CD14-positive monocyte (primary cell): ENCODE measurements at regions of chr10 and their contacts with region 1.

Region 1: GRCh38 chr10:79195091-79195923 is 126.5 kb downstream of the ZMIZ1 start:
- DNase-seq: peak; percentile 75 to 80 (median 79)
- H3K4me3 ChIP-seq: no peak overlapping the region
- H3K4me3 Mint-ChIP-seq: no peak overlapping the region
- H3K27ac ChIP-seq: no peak overlapping the region
- H3K27ac Mint-ChIP-seq: peak overlapping the region in 2 of 7 donors; percentile 17 to 56
- H3K4me1 ChIP-seq: peaks cover 4 to 5% of the 10 kb centered on the region in 2 donors
- H3K4me1 Mint-ChIP-seq: peaks cover 16% of the 10 kb centered on the region
- H3K27me3 ChIP-seq: no peaks in the 10 kb centered on the region
- H3K27me3 Mint-ChIP-seq: peaks cover 0 to 3% (median 2%) of the 10 kb centered on the region in 3 donors
- CTCF ChIP-seq: peak; percentile 97

Region 2: DNA sequence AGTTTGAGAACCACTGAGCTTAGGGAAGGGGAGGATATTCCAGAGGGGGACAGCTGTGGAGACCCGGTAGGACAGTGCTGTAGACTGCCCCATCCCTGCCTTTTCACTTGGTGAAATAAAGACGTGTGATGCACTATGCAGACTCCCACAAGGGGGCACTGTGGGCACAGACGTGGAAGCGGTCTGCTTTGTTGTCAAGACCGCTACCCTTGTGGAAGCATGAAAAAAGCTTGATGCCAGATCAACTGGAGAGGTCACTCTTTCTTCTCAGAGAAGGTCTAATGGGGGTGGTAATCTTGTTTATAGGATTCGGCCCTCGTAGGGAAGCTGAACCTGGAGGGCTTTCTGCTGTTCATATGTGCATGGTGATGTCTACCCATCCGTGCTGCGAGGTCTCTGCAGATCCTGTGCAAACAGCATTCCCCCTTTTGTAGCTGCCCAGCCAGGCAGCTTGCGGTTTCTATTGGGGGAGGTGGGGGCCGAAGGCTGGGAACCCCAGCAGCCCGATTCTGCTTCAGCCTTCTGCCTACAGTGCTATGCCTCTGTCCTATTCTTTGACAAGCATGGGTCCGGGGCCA is 1147.9 kb before region 1 on chr10:
- intact Hi-C with region 1: loop called (anchors 2 to 5 kb)
- DNase-seq: peak; percentile 54 to 65 (median 65)
- H3K4me3 ChIP-seq: no peak overlapping the region
- H3K4me3 Mint-ChIP-seq: peak overlapping the region in 1 of 2 donors; percentile 20
- H3K27ac ChIP-seq: no peak overlapping the region
- H3K27ac Mint-ChIP-seq: peak overlapping the region in 1 of 7 donors; percentile 57
- H3K4me1 ChIP-seq: peaks cover 0 to 8% of the 10 kb centered on the region in 2 donors
- H3K4me1 Mint-ChIP-seq: peaks cover 19% of the 10 kb centered on the region
- H3K27me3 ChIP-seq: no peaks in the 10 kb centered on the region
- H3K27me3 Mint-ChIP-seq: peaks cover 0 to 2% (median 1%) of the 10 kb centered on the region in 3 donors
- CTCF ChIP-seq: peak; percentile 90

Region 3: DNA sequence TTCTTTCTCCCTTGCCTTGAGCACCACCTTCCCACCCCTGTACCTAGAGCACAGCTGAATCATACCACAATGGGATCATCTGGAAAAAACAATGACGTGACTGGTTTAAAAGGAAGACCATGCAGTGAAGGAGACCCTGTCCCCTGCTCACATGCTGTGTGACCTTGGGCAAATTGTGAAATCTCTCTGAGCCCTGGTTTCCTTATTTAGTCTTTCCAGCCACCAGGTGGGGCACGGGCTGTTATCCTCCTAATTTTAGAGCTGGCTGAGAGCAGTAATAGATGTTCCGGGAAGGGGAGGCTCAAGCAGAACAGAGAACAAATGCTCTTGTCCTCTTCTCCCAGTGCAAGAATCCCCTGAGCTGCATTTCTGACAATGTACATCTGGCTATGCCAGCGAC is 963.4 kb before region 1 on chr10:
- intact Hi-C with region 1: loop called (anchors 5 to 10 kb)
- DNase-seq: peak in 2 of 3 donors; percentile 36 to 47
- H3K4me3 ChIP-seq: no peak overlapping the region
- H3K4me3 Mint-ChIP-seq: no peak overlapping the region
- H3K27ac ChIP-seq: no peak overlapping the region
- H3K27ac Mint-ChIP-seq: peak overlapping the region in 1 of 7 donors; percentile 19
- H3K4me1 ChIP-seq: peaks cover 6 to 10% of the 10 kb centered on the region in 2 donors
- H3K4me1 Mint-ChIP-seq: peaks cover 8% of the 10 kb centered on the region
- H3K27me3 ChIP-seq: no peaks in the 10 kb centered on the region
- H3K27me3 Mint-ChIP-seq: peaks cover 7 to 12% (median 11%) of the 10 kb centered on the region in 3 donors
- CTCF ChIP-seq: peak; percentile 41

Region 4: GRCh38 chr10:78664929-78665553 is 530.3 kb before region 1 on chr10:
- intact Hi-C with region 1: loop called in 1 of 2 experiments (anchors 10 kb)
- DNase-seq: peak in 2 of 3 donors; percentile 17 to 21
- H3K4me3 ChIP-seq: no peak overlapping the region
- H3K4me3 Mint-ChIP-seq: no peak overlapping the region
- H3K27ac ChIP-seq: no peak overlapping the region
- H3K27ac Mint-ChIP-seq: no peak overlapping the region
- H3K4me1 ChIP-seq: no peaks in the 10 kb centered on the region
- H3K4me1 Mint-ChIP-seq: no peaks in the 10 kb centered on the region
- H3K27me3 ChIP-seq: no peaks in the 10 kb centered on the region
- H3K27me3 Mint-ChIP-seq: peaks cover 2 to 11% (median 5%) of the 10 kb centered on the region in 3 donors
- CTCF ChIP-seq: peak; percentile 71

Region 5: DNA sequence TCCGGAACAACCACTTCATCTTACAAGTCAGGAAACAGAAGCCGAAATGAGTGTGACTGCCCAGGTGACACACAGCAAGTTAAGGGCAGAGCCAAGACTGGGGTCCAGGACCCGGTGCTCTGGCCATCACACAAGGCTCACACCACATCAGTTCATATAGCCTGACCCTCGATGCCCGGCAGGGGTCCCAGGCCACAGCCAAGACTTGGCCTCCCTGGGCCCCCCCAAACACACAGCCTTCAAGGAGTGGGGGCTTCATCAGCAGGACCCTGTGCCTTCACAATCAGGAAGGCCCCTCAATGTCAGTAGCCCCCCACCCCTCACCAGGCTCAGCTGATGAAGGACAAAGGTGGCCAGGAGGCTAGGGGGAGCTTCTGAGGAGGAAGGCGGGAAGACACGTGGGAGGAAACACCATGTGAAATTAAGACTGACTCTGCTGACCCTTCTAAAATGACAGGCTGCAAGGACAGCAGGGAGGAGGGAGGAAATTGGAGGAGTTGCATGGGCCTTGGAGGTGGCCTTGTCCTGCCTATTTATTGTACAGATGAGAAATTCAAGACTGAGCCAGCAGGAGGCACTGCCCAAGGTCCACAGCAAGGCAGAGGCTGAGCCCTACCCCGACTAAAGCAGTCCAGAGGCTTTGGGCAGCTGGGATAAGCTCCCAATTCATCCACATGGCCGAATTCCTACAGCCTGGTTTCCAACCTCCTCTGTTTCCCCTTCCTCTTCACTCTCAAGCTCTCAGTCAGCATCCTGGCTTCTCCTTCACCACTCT is 342.7 kb before region 1 on chr10:
- intact Hi-C with region 1: loop called (anchors 5 to 10 kb)
- DNase-seq: peak in 2 of 3 donors; percentile 17 to 18
- H3K4me3 ChIP-seq: no peak overlapping the region
- H3K4me3 Mint-ChIP-seq: no peak overlapping the region
- H3K27ac ChIP-seq: no peak overlapping the region
- H3K27ac Mint-ChIP-seq: no peak overlapping the region
- H3K4me1 ChIP-seq: no peaks in the 10 kb centered on the region
- H3K4me1 Mint-ChIP-seq: no peaks in the 10 kb centered on the region
- H3K27me3 ChIP-seq: no peaks in the 10 kb centered on the region
- H3K27me3 Mint-ChIP-seq: peaks cover 1 to 5% (median 5%) of the 10 kb centered on the region in 3 donors
- CTCF ChIP-seq: peak; percentile 28

Region 6: GRCh38 chr10:79127151-79127961 is 68.0 kb before region 1 on chr10:
- intact Hi-C with region 1: loop called in 1 of 2 experiments (anchors 10 kb)
- DNase-seq: peak; percentile 63 to 88 (median 77)
- H3K4me3 ChIP-seq: no peak overlapping the region
- H3K4me3 Mint-ChIP-seq: peak overlapping the region in 1 of 2 donors; percentile 55
- H3K27ac ChIP-seq: peak overlapping the region; percentile 40 to 59
- H3K27ac Mint-ChIP-seq: peak overlapping the region in 6 of 7 donors; percentile 67 to 85 (median 78)
- H3K4me1 ChIP-seq: peaks cover 50 to 58% of the 10 kb centered on the region in 2 donors
- H3K4me1 Mint-ChIP-seq: peaks cover 67% of the 10 kb centered on the region
- H3K27me3 ChIP-seq: no peaks in the 10 kb centered on the region
- H3K27me3 Mint-ChIP-seq: peaks cover 0 to 3% (median 2%) of the 10 kb centered on the region in 3 donors
- CTCF ChIP-seq: no peak